Activated B cell treated with CpG ODN at 0.5 μM for 24 hours (primary cell): ENCODE measurements at regions of chr1 and their contacts with region 1.

Region 1: GRCh38 chr1:27111626-27112573 is 43.0 kb downstream of the SLC9A1 start:
- DNase-seq: no peak
- ATAC-seq: peak; percentile 97
- H3K4me3 Mint-ChIP-seq: peak overlapping the region; percentile 48
- H3K27ac Mint-ChIP-seq: peak overlapping the region; percentile 80
- H3K4me1 Mint-ChIP-seq: peaks cover 24% of the 10 kb centered on the region
- H3K27me3 Mint-ChIP-seq: no peaks in the 10 kb centered on the region
- CTCF ChIP-seq: no peak

Region 2: GRCh38 chr1:27136998-27137542 is 25.2 kb after region 1 on chr1:
- CTCF ChIA-PET with region 1: interaction called, 6 read pairs
- POLR2A ChIA-PET with region 1: interaction called, 5 read pairs
- intact Hi-C with region 1: loop called (anchors 1 kb)
- DNase-seq: peak; percentile 41
- ATAC-seq: peak; percentile 83
- H3K4me3 Mint-ChIP-seq: peak overlapping the region; percentile 66
- H3K27ac Mint-ChIP-seq: peak overlapping the region; percentile 93
- H3K4me1 Mint-ChIP-seq: peaks cover 56% of the 10 kb centered on the region
- H3K27me3 Mint-ChIP-seq: no peaks in the 10 kb centered on the region
- CTCF ChIP-seq: no peak